Activated CD4-positive, alpha-beta T cell treated with anti-CD3 and anti-CD28 coated beads, Interleukin-2, amount 10 ng/mL, durations not matched to agents 24 days and 14 days (primary cell): ENCODE measurements at regions of chr17 and their contacts with region 1.

Region 1: DNA sequence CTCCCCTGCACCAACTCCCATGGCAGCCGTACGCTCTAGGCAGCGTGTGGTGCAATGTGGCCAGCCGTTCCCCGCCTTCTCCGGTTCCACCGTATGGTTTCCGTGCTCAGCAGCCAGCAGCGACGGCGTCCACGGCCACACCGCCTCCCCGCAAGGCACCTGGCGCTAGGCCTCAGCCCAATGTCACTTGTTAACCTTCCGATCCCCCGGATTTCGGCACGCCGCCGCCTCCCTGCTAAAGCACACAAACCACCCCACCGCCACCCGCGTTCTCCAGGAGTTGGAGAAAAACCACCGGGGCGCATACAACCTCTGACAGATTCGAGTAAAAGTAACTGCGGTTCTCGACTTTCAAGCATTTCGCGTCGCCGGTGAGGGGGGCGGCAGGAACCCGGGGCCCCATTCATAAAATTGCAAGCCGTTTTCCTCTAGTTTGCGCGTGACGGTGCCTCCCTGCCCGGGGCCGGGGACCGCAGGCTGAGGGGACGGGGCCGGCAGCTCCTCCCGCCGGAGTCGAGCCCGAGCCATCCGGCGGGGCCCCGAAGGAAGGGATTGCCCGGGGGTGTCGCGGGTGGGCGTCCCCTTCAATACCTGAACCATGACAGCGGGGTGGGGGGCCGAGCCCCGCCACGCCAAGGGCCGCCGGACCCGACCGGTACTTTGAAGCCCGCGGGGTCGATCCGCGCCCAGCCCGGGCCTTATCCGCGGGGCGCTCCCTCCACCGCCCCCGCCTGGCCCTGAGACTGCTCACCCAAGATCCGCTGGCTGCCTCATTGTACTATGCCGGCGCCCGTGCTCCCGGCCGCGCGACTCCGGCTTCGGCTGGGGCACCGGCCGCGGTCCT is at the start of gene TEX2:
- DNase-seq: peak; percentile 90
- H3K4me3 Mint-ChIP-seq: peak within 1 kb of the TSS; percentile 89
- H3K27ac Mint-ChIP-seq: peak within 1 kb of the TSS; percentile 94
- H3K4me1 Mint-ChIP-seq: peaks cover 32% of the 10 kb centered on the region
- H3K27me3 Mint-ChIP-seq: peaks cover 16% of the 10 kb centered on the region
- total RNA-seq, gene TEX2: 22.2 and 23.9 TPM in 2 replicates

Region 2: GRCh38 chr17:64020056-64020766 is 242.4 kb before region 1 on chr17 and contains the start of gene ICAM2:
- intact Hi-C with region 1: loop called (anchors 2 kb)
- DNase-seq: peak; percentile 96
- H3K4me3 Mint-ChIP-seq: peak within 1 kb of the TSS; percentile 94
- H3K27ac Mint-ChIP-seq: peak within 1 kb of the TSS; percentile 98
- H3K4me1 Mint-ChIP-seq: peaks cover 66% of the 10 kb centered on the region
- H3K27me3 Mint-ChIP-seq: no peaks in the 10 kb centered on the region
- total RNA-seq, gene ICAM2: 62.2 TPM in 2 replicates

Region 3: GRCh38 chr17:64155751-64156544 is 106.7 kb before region 1 on chr17:
- intact Hi-C with region 1: no loop called
- DNase-seq: no peak
- H3K4me3 Mint-ChIP-seq: no peak overlapping the region
- H3K27ac Mint-ChIP-seq: no peak overlapping the region
- H3K4me1 Mint-ChIP-seq: peaks cover 2% of the 10 kb centered on the region
- H3K27me3 Mint-ChIP-seq: no peaks in the 10 kb centered on the region